Colonic mucosa (tissue), 4 donors: ENCODE measurements at regions of chr15 and their contacts with region 1.

Region 1: GRCh38 chr15:57859130-57859685 is 152.7 kb downstream of the POLR2M start:
- DNase-seq: no peak
- H3K4me3 ChIP-seq: no peak overlapping the region
- H3K27ac ChIP-seq: no peak overlapping the region
- H3K4me1 ChIP-seq: no peaks in the 10 kb centered on the region
- H3K27me3 ChIP-seq: no peaks in the 10 kb centered on the region
- CTCF ChIP-seq: no peak

Region 2: DNA sequence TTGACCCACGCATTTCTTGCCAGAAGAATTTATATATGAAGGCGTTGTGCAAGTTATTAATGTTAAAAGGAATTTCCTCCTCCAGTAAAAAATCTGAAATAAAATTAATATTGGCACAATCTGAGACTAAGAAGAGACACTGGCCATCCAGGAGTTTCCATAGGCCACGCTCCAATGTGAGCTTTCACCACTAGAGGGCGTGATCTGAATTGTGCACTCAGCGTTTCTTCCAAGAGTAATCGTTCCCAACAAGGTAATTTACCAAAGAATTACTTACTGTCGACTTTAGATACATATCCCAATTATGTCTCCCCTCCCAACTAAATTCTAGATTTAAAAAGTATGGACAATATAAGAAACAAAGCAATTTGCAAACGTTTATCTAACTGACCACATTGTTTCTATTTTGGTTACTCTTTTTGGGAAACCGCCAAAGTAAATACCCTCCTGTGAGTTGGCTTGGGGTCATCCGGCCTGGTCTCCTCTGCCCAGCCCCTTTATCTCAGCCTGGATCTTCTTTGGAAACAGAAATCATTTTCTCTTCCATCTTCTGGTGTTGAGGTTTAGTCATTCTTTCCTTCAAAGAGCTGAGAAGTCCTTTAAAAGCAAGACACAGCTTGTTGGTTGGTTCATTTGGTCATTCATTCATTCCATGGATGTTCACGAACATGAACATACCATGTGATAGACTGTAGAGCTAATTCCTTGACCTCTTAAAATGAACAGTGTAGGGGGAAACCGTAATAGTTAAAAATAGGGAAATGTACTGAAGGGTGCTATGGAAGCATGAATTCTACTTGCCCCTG is 126.5 kb before region 1 on chr15:
- intact Hi-C with region 1: no loop called
- DNase-seq: peak; percentile 64
- H3K4me3 ChIP-seq: no peak overlapping the region
- H3K27ac ChIP-seq: no peak overlapping the region
- H3K4me1 ChIP-seq: peaks cover 5% of the 10 kb centered on the region
- H3K27me3 ChIP-seq: no peaks in the 10 kb centered on the region
- CTCF ChIP-seq: peak; percentile 82

Region 3: GRCh38 chr15:57751177-57751800 is 107.9 kb before region 1 on chr15:
- intact Hi-C with region 1: loop called (anchors 5 kb)
- DNase-seq: no peak
- H3K4me3 ChIP-seq: no peak overlapping the region
- H3K27ac ChIP-seq: no peak overlapping the region
- H3K4me1 ChIP-seq: no peaks in the 10 kb centered on the region
- H3K27me3 ChIP-seq: no peaks in the 10 kb centered on the region
- CTCF ChIP-seq: no peak

Region 4: DNA sequence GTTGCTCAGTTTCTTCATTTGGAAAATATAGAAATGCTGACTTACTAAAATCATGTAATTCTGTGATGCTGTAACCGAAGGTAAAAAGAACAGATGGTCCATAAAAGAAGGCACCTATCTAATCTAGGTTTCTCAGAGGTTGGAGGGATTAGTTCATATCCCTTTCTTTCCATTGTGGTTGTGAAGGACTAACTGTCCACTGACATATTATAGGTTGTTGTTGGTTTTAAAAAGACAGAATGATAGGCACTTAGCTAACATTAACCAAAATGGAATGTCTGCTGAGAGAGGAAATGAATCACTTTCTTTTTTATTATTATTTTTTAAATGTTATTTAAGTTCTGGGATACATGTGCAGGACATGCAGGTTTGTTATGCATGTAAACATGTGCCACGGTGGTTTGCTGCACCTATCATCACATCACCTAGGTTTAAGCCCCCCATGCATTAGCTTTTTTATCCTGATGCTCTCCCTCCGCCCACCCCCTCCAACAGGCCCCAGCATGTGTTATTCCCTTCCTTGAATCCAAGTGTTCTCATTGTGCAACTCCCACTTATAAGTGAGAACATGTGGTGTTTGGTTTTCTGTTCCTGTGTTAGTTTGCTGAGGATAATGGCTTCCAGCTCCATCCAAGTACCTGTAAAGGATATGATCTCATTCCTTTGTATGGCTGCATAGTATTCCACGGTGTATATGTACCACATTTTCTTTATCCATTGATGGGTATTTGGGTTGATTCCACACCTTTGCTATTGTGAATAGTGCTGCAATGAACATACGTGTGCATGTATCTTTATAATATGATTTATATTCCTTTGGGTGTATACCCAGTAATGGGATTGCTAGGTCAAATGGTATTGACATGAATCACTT is 160.5 kb after region 1 on chr15:
- intact Hi-C with region 1: no loop called
- DNase-seq: no peak
- H3K4me3 ChIP-seq: no peak overlapping the region
- H3K27ac ChIP-seq: no peak overlapping the region
- H3K4me1 ChIP-seq: no peaks in the 10 kb centered on the region
- H3K27me3 ChIP-seq: no peaks in the 10 kb centered on the region
- CTCF ChIP-seq: no peak